Naive thymus-derived CD4-positive, alpha-beta T cell (primary cell): ENCODE measurements at regions of chr3 and their contacts with region 1.

Region 1: DNA sequence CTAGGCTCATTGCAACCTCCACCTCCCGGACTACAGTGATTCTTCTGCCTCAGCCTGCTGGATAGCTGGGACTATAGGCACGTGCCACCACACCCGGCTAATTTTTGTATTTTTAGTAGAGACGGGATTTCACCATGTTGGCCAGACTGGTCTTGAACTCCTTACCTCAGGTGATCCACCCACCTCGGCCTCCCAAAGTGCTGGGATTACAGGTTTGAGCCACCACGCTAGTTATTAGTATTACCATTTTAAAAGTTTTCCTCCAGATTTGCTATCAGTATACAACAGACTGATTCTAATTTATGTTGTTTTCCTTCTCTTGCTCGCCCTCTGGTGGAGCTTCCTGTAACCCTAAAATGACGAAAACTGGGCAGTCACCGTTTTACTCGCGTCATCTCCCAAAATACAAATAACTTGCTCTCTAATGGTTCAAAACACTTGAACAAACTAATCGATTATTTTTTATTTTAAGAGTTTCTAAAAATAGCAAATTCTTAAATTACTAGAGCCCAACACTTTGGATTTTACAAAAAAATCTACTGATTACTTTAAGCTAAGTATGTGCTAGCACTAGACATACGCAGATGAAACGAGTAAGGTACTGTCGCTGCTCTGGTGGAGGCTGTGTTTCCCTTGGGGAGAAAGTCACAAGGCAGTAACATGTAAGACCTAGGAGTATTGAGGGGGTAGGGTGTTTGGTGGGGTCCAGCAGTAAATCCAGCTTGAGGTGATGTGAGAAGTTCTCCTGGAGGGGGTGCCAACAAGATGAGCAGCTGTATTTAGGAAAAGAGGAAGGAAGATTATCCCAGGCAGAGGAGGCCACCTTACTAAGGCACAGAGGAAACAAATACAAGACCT is 203.3 kb downstream of the MBNL1 start:
- DNase-seq: peak; percentile 22 to 80 (median 72)
- ATAC-seq: peak; percentile 93
- H3K4me3 ChIP-seq: peak overlapping the region; percentile 32
- H3K4me3 Mint-ChIP-seq: peak overlapping the region; percentile 6 to 82 (median 72)
- H3K27ac ChIP-seq: peak overlapping the region; percentile 81
- H3K27ac Mint-ChIP-seq: peak overlapping the region; percentile 29 to 96 (median 88)
- H3K4me1 ChIP-seq: peaks cover 4 to 9% of the 10 kb centered on the region in 2 donors
- H3K4me1 Mint-ChIP-seq: peaks cover 0 to 21% (median 12%) of the 10 kb centered on the region in 7 donors
- H3K27me3 ChIP-seq: no peaks in the 10 kb centered on the region
- H3K27me3 Mint-ChIP-seq: peaks cover 0 to 16% (median 0%) of the 10 kb centered on the region in 5 donors

Region 2: GRCh38 chr3:151468284-151468917 is 1003.6 kb before region 1 on chr3:
- CTCF ChIA-PET with region 1: interaction called, 3 read pairs
- POLR2A ChIA-PET with region 1: no interaction called
- intact Hi-C with region 1: loop called in 1 of 2 experiments (anchors 2 kb)
- DNase-seq: peak in 7 of 9 donors; percentile 14 to 64 (median 31)
- ATAC-seq: peak; percentile 67
- H3K4me3 ChIP-seq: no peak overlapping the region
- H3K4me3 Mint-ChIP-seq: no peak overlapping the region
- H3K27ac ChIP-seq: no peak overlapping the region
- H3K27ac Mint-ChIP-seq: no peak overlapping the region
- H3K4me1 ChIP-seq: no peaks in the 10 kb centered on the region
- H3K4me1 Mint-ChIP-seq: no peaks in the 10 kb centered on the region
- H3K27me3 ChIP-seq: no peaks in the 10 kb centered on the region
- H3K27me3 Mint-ChIP-seq: peaks cover 10 to 22% (median 12%) of the 10 kb centered on the region in 5 donors

Region 3: DNA sequence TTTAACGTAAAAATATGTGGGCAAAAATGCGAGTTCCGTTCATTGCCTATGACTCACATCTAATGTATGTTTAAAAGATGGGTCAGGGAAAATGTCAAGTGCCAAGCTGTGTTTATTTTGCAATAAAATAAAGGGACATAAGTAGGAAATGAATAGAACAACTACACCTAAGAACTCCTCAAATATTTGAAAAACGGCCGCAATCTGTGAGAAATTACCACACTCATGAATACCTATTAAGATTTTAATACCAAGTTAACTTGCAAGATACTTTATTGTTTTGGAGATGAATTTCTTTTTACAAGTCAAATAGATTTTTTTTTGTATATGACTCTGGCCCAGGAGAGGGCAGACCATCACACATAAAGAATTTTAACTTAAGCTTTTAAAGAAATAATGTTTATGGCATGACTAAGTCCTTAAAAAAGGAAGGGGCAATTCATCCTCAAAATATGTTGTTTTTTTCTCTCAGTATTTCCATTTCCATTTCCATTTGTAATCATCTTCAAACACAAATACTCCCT is 445.9 kb before region 1 on chr3:
- CTCF ChIA-PET with region 1: interaction called, 4 read pairs
- POLR2A ChIA-PET with region 1: no interaction called
- intact Hi-C with region 1: loop called (anchors 1 to 2 kb)
- DNase-seq: peak in 1 of 9 donors; percentile 2
- ATAC-seq: no peak
- H3K4me3 ChIP-seq: no peak overlapping the region
- H3K4me3 Mint-ChIP-seq: no peak overlapping the region
- H3K27ac ChIP-seq: no peak overlapping the region
- H3K27ac Mint-ChIP-seq: no peak overlapping the region
- H3K4me1 ChIP-seq: no peaks in the 10 kb centered on the region
- H3K4me1 Mint-ChIP-seq: no peaks in the 10 kb centered on the region
- H3K27me3 ChIP-seq: peaks cover 0 to 4% of the 10 kb centered on the region in 2 donors
- H3K27me3 Mint-ChIP-seq: peaks cover 0 to 18% (median 4%) of the 10 kb centered on the region in 5 donors

Region 4: GRCh38 chr3:152071924-152072323 is 400.1 kb before region 1 on chr3:
- CTCF ChIA-PET with region 1: interaction called, 17 read pairs
- POLR2A ChIA-PET with region 1: no interaction called
- intact Hi-C with region 1: loop called (anchors 1 kb)
- DNase-seq: peak in 6 of 9 donors; percentile 10 to 43 (median 32)
- ATAC-seq: peak; percentile 75
- H3K4me3 ChIP-seq: no peak overlapping the region
- H3K4me3 Mint-ChIP-seq: no peak overlapping the region
- H3K27ac ChIP-seq: no peak overlapping the region
- H3K27ac Mint-ChIP-seq: no peak overlapping the region
- H3K4me1 ChIP-seq: peaks cover 0 to 5% of the 10 kb centered on the region in 2 donors
- H3K4me1 Mint-ChIP-seq: peaks cover 0 to 6% (median 3%) of the 10 kb centered on the region in 7 donors
- H3K27me3 ChIP-seq: no peaks in the 10 kb centered on the region
- H3K27me3 Mint-ChIP-seq: peaks cover 0 to 6% (median 0%) of the 10 kb centered on the region in 5 donors

Region 5: GRCh38 chr3:152183473-152183872 is 288.6 kb before region 1 on chr3:
- CTCF ChIA-PET with region 1: interaction called, 8 read pairs
- POLR2A ChIA-PET with region 1: no interaction called
- intact Hi-C with region 1: loop called (anchors 1 to 5 kb)
- DNase-seq: peak in 7 of 9 donors; percentile 41 to 64 (median 55)
- ATAC-seq: peak; percentile 83
- H3K4me3 ChIP-seq: no peak overlapping the region
- H3K4me3 Mint-ChIP-seq: peak overlapping the region; percentile 40 to 74 (median 52)
- H3K27ac ChIP-seq: no peak overlapping the region
- H3K27ac Mint-ChIP-seq: peak overlapping the region in 8 of 9 donors; percentile 48 to 89 (median 70)
- H3K4me1 ChIP-seq: peaks cover 13 to 34% of the 10 kb centered on the region in 2 donors
- H3K4me1 Mint-ChIP-seq: peaks cover 39 to 82% (median 76%) of the 10 kb centered on the region in 7 donors
- H3K27me3 ChIP-seq: no peaks in the 10 kb centered on the region
- H3K27me3 Mint-ChIP-seq: no peaks in the 10 kb centered on the region

Region 6: GRCh38 chr3:152508705-152509104 is 36.7 kb after region 1 on chr3:
- CTCF ChIA-PET with region 1: no interaction called
- POLR2A ChIA-PET with region 1: no interaction called
- intact Hi-C with region 1: loop called in 1 of 2 experiments (anchors 5 kb)
- DNase-seq: no peak
- ATAC-seq: no peak
- H3K4me3 ChIP-seq: no peak overlapping the region
- H3K4me3 Mint-ChIP-seq: no peak overlapping the region
- H3K27ac ChIP-seq: no peak overlapping the region
- H3K27ac Mint-ChIP-seq: no peak overlapping the region
- H3K4me1 ChIP-seq: no peaks in the 10 kb centered on the region
- H3K4me1 Mint-ChIP-seq: peaks cover 0 to 22% (median 0%) of the 10 kb centered on the region in 7 donors
- H3K27me3 ChIP-seq: no peaks in the 10 kb centered on the region
- H3K27me3 Mint-ChIP-seq: peaks cover 0 to 6% (median 0%) of the 10 kb centered on the region in 5 donors

Region 7: DNA sequence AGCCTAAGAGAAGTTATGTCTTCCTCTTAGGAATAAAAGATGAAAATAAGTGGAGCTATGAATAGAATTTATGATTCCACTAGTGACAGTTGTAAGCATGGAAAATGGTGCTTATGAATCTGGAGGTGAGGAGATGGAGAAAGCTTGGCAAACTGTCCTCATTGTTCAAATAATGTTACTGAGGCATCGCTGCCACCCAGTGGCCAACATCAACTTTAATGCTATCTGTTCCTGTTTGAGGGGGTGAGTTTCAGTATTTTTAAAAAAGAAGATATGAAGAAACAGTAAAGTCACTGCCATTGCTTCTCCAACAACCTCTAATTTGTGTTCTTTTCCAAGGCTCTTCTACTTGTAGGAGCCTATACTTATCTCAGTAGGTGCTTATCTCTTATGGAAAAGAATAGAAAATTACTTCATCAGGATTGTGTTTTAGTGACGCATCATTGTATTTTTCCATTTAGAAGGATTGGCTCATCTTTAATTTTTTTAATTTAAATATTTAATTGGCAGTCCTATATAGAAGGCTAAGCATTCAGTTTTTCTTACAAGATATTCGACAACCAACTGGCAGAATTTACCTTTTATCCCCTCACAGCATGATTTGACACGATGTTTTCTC is 102.5 kb after region 1 on chr3:
- CTCF ChIA-PET with region 1: no interaction called
- POLR2A ChIA-PET with region 1: no interaction called
- intact Hi-C with region 1: loop called (anchors 1 to 2 kb)
- DNase-seq: peak in 6 of 9 donors; percentile 9 to 30 (median 16)
- ATAC-seq: no peak
- H3K4me3 ChIP-seq: no peak overlapping the region
- H3K4me3 Mint-ChIP-seq: no peak overlapping the region
- H3K27ac ChIP-seq: no peak overlapping the region
- H3K27ac Mint-ChIP-seq: no peak overlapping the region
- H3K4me1 ChIP-seq: no peaks in the 10 kb centered on the region
- H3K4me1 Mint-ChIP-seq: no peaks in the 10 kb centered on the region
- H3K27me3 ChIP-seq: no peaks in the 10 kb centered on the region
- H3K27me3 Mint-ChIP-seq: peaks cover 0 to 43% (median 10%) of the 10 kb centered on the region in 5 donors

Region 8: DNA sequence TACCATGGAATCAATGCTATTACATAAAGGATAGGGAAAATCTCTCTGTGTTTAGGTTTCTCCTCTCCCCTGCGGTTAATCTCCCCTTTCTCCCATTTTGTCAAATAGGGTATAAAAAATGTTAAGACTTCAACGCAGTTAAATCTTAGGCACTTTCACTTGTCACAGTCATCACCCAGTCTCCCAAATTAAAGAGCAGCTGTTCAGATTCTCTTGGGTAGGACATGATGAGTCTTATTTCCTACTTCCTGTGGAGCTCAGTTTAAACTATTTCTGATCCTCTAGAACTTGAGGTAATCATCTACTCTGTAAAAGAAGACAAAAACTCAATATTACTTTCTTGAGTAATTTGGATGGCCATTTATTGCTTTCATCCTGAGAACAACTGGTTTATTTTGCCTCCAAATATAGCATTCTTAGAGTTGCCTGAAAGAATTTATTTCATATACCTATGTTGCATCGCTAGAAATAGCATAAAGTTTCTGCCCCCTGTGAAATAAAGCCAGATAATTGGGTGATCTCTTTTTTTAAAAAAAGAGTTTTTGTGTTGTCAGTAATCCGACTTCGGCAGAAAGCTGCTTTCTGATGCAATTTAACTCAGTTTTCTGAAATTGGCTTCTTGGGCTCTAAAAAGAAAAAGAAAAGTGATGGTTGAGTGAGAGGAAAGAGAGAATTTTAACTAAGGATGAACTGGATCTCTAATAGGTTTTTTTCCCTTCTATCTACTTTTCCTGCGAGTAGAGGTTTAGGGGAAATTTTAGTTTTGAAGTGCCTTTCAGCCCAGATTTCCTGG is 710.7 kb after region 1 on chr3:
- CTCF ChIA-PET with region 1: no interaction called
- POLR2A ChIA-PET with region 1: no interaction called
- intact Hi-C with region 1: no loop called
- DNase-seq: no peak
- ATAC-seq: no peak
- H3K4me3 ChIP-seq: no peak overlapping the region
- H3K4me3 Mint-ChIP-seq: no peak overlapping the region
- H3K27ac ChIP-seq: no peak overlapping the region
- H3K27ac Mint-ChIP-seq: peak overlapping the region in 2 of 9 donors; percentile 6 to 41
- H3K4me1 ChIP-seq: no peaks in the 10 kb centered on the region
- H3K4me1 Mint-ChIP-seq: peaks cover 9 to 28% (median 20%) of the 10 kb centered on the region in 7 donors
- H3K27me3 ChIP-seq: no peaks in the 10 kb centered on the region
- H3K27me3 Mint-ChIP-seq: no peaks in the 10 kb centered on the region